Activated T-helper 1 cell treated with anti-CD3 and anti-CD28 coated beads, Interleukin-12 subunit alpha, Interleukin-12 subunit beta, Interleukin-2, Interleukin-4 antibody, amounts not matched to agents 30 ng/mL and 10 ng/mL and 1 ng/mL, durations not matched to agents 14 hours and 24 hours and 36 hours (primary cell): ENCODE measurements at regions of chr20 and their contacts with region 1.

Region 1: DNA sequence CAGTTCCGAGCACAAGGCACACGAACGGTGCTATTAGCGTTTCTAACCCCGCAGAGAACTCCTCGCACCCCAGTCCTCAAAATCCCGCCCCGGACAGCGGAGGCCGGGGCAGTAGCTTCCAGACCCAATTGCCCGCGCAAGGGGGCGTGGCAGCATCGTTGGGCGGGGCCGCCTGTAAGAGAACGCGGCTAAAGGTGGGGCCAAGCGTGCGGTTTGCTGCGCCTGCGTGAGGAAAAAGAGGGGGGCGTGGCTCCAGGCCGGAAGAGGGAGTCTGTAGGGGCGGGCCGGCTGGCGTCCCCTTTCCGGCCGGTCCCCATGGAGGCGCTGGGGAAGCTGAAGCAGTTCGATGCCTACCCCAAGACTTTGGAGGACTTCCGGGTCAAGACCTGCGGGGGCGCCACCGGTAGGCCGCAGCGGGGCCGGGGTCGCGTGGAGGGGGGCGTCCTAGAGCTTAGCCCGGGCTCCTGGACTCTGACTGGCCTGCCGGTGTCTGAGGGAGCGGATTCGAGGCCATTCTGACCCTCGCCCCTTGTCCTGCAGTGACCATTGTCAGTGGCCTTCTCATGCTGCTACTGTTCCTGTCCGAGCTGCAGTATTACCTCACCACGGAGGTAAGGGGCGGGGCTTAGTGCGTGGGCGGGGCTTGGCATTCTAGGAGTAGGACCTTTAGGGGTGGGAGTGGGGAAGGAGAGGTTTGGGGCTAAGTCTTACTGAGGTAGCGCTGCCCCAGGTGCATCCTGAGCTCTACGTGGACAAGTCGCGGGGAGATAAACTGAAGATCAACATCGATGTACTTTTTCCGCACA is at the start of gene ERGIC3:
- DNase-seq: peak; percentile 96
- H3K4me3 Mint-ChIP-seq: peak within 1 kb of the TSS; percentile 90
- H3K27ac Mint-ChIP-seq: peak within 1 kb of the TSS; percentile 88
- H3K4me1 Mint-ChIP-seq: peaks cover 12% of the 10 kb centered on the region
- H3K27me3 Mint-ChIP-seq: no peaks in the 10 kb centered on the region
- total RNA-seq, gene ERGIC3: 132 and 137 TPM in 2 replicates

Region 2: DNA sequence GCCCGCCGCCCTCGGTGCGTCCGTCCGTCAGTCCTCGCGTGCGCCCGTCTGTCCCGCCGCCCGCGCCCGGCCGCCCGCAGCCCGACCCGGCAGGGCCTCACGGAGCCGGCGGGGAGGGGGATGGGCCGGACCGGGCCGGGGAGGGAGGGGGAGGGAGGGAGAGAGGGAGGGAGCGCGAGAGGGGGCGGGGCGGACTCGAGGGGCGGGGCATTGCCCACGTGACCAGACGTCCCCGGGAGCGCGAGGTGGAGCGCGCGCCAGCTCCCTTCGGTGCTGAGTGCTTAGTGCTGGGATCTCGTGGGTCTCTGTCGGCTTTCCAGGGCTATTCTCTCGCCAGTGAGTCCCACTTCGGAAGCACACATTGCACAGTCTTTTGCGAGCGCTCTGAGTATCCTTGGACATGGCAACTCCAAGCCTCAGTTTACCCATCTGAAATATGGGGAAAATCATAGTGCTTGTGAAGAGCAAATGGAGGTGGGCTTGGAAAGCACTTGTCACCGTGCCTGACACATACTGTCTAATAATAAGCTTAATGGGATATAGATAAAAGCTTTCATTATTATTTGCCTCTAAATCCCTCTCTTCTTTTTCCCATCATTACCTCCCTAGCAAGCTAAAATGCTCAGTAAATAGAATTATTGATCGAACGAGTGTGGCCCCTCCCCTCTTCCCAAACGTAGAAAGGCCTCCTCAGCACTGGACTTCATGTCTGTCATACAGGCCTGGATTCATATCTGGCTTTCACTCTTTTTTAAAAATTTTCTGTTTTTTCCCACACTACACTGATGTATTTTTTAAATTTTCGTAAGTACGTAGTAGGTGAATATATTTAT is 716.2 kb before region 1 on chr20 and contains the start of gene NCOA6:
- intact Hi-C with region 1: loop called (anchors 5 kb)
- DNase-seq: peak; percentile 68
- H3K4me3 Mint-ChIP-seq: peak within 1 kb of the TSS; percentile 97
- H3K27ac Mint-ChIP-seq: peak within 1 kb of the TSS; percentile 91
- H3K4me1 Mint-ChIP-seq: peaks cover 30% of the 10 kb centered on the region
- H3K27me3 Mint-ChIP-seq: peaks cover 13% of the 10 kb centered on the region
- total RNA-seq, gene NCOA6: 25.5 and 29.1 TPM in 2 replicates

Region 3: DNA sequence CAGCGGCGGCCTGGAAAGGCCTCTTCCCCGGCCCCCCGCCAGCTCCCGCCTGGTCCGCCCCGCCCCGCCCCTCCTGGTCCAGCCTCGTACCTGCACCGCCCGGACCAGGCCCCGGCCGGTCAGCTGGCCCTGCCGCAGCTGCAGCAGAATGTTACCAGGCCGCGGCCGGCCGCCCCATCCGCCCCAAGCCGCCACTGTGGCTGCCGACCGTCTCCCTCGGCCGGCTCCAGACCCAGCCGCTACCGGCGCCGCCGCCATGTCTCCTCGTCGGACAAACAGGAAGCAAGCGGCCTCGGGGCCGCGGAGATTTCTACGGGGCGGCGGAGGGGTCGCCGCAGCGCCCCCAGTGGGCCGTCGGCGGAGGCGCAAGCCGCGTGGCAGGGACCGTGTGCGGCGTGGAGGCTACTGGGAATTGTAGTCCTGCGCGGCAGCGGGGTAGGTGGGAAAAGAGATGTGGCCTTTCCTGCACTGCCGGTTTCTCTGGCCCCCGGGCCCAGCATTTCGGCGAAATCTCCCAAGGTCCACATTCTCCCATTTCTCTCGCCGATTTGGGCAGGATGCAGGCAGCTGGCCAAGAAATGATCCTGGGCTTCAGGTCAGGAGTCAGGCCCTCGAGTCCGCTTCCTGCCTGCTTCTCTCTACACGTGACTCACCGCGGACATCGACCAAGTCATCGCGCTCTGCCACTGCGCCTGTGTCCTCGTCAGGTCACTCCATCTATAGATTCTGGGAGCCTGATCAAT is 449.3 kb before region 1 on chr20 and contains the start of gene TRPC4AP:
- intact Hi-C with region 1: loop called (anchors 5 kb)
- DNase-seq: peak; percentile 88
- H3K4me3 Mint-ChIP-seq: peak within 1 kb of the TSS; percentile 92
- H3K27ac Mint-ChIP-seq: peak within 1 kb of the TSS; percentile 94
- H3K4me1 Mint-ChIP-seq: peaks cover 48% of the 10 kb centered on the region
- H3K27me3 Mint-ChIP-seq: no peaks in the 10 kb centered on the region
- total RNA-seq, gene TRPC4AP: 53.9 and 54.0 TPM in 2 replicates

Region 4: DNA sequence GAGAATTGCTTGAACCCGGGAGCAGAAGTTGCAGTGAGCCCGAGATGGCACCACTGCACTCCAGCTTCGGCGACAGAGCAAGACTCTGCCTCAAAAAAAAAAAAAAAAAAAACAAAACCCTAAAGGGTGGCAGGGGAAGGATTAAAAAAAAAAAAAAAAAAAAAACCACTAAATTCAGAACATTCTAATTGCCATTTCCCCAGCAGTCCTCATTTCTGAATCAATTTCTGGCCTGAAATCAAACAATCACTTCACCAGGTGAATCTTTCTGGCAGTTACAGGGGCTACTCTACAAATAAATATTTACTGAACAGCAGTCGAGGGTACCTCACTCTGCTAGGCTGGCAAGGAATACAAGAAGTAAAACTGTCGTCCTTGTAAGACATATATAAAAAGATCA is 131.4 kb before region 1 on chr20:
- intact Hi-C with region 1: loop called (anchors 5 kb)
- DNase-seq: no peak
- H3K4me3 Mint-ChIP-seq: peak overlapping the region; percentile 87
- H3K27ac Mint-ChIP-seq: peak overlapping the region; percentile 19
- H3K4me1 Mint-ChIP-seq: peaks cover 6% of the 10 kb centered on the region
- H3K27me3 Mint-ChIP-seq: no peaks in the 10 kb centered on the region

Region 5: DNA sequence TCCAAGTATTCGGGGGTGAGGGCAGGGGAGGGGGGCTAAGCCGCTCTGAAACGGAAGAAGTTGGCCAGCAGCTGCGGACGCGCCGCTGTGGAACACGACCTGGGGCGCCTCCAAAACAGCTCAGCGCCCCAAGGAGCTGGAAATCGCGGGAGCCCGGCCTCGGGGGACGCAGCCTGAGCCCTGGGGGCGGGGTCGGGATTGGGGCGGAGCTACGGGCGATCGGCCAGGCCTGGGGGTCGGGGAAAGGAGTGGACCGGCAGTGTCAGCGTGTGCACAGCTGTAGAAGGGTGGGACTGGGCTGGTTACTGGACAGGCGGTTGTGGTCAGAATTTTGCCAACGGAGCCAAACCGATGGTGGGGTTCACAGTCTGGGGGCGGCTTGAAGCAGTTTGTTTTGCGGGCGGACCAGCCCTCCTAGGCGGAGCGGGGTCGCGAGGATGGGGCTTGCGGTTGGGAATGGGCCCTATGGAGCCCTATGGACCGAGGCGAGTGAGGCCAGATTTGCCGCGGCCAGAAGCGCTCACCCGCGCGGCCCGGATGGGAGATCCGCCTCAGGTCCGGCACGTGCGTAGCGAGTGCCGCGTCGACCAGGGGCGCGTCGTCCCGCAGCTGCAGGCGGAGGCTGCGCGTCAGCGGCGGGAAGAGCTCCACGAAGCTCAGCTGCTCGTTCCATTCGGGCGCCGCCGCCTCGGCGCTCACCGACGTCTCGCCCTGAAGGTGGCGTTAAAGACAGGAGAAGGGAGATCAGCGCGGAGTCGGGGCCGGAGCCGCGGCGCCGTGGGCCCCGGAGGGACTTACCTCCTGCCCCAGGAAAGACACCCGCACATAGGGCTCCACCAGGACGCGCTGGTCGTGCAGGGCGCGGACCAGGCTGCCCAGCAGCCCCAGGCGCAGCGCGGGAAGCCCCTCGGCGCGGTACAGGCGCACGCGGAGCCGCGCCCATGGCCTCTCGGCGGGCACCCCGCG is 59.3 kb after region 1 on chr20:
- intact Hi-C with region 1: loop called (anchors 5 kb)
- DNase-seq: peak; percentile 70
- H3K4me3 Mint-ChIP-seq: peak overlapping the region; percentile 72
- H3K27ac Mint-ChIP-seq: peak overlapping the region; percentile 31
- H3K4me1 Mint-ChIP-seq: no peaks in the 10 kb centered on the region
- H3K27me3 Mint-ChIP-seq: peaks cover 32% of the 10 kb centered on the region

Region 6: DNA sequence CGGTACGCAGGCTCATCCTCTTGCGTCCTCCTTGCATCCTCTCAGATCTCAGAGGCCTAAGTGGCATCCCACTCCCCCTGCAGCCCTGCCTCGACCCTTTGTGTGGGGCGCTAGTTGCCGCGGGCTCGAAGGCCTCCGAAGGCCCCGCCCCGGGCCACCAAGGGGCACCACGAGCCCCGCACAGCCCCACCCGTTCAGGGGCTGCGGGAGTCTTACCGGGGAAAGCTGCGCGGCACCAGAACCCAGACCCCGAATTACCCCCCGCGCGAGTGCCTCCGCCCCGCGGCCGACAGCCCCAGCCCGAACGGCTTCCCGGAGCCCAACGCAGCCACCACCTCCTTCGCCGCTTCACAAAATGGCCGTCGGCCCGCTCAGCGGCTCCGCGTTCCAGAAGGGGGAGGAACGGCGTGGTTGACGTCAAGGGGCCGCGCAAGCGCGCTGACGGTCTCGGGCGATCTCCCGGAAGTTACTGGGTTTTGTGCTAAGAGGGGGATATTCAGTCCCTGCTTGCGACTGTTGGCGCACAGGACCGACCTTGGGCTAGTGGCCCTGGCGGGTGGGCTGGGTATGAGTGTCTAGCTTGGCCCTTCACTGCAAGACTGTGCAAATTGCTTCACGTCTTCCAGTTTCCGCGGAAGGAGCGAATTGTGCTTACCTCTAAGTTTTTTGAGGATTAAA is 122.7 kb after region 1 on chr20 and contains the starts of genes CPNE1 and RBM12:
- intact Hi-C with region 1: loop called (anchors 1 kb)
- DNase-seq: peak; percentile 91
- H3K4me3 Mint-ChIP-seq: peak within 1 kb of the TSS; percentile 95
- H3K27ac Mint-ChIP-seq: peak within 1 kb of the TSS; percentile 99
- H3K4me1 Mint-ChIP-seq: peaks cover 48% of the 10 kb centered on the region
- H3K27me3 Mint-ChIP-seq: no peaks in the 10 kb centered on the region
- total RNA-seq, gene CPNE1: 304 and 308 TPM in 2 replicates
- total RNA-seq, gene RBM12: 151 and 168 TPM in 2 replicates

Region 7: DNA sequence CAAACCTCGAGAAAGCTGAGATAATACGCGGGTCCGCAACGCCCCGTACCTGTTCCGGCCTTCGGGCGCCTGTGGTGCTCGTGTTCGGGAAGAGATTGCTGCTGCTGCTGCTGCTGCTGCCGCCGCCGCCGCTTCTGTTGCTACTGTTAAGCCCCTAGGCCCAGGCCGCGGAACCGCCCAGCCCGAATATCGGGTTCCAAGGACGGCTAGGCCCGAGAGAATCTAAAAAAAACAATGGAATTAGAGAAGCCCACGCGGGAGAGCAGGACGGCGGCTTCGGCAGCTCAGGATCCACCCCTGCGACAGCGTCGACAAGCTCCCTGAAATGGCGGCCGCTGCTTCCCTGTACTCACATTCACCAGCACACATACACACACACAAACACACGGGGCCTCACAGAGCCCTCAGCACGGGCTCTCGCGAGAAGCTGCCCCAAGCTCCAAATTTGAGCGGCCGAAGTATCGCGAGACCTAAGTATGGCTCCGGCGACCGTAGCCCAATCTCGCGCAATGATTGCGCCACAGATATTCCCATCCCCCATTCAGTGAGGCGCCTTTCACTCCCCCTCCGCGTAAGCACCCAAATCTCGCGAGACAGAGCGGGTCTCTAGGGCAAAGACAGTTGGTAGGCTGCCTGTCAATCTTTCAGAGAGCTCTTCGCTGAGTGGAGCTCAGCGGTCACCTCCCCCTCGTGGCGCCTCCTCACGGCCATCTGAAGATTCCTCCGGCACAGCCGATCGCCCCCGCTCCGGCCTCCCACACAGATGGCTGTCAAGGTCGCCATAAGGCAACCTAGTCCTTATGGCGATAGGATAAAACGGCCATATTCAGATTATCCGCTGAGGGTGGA is 200.1 kb after region 1 on chr20 and contains the start of gene RBM39:
- intact Hi-C with region 1: loop called (anchors 1 kb)
- DNase-seq: peak; percentile 100
- H3K4me3 Mint-ChIP-seq: peak within 1 kb of the TSS; percentile 98
- H3K27ac Mint-ChIP-seq: peak within 1 kb of the TSS; percentile 99
- H3K4me1 Mint-ChIP-seq: peaks cover 40% of the 10 kb centered on the region
- H3K27me3 Mint-ChIP-seq: no peaks in the 10 kb centered on the region
- total RNA-seq, gene RBM39: 349 and 357 TPM in 2 replicates

Region 8: DNA sequence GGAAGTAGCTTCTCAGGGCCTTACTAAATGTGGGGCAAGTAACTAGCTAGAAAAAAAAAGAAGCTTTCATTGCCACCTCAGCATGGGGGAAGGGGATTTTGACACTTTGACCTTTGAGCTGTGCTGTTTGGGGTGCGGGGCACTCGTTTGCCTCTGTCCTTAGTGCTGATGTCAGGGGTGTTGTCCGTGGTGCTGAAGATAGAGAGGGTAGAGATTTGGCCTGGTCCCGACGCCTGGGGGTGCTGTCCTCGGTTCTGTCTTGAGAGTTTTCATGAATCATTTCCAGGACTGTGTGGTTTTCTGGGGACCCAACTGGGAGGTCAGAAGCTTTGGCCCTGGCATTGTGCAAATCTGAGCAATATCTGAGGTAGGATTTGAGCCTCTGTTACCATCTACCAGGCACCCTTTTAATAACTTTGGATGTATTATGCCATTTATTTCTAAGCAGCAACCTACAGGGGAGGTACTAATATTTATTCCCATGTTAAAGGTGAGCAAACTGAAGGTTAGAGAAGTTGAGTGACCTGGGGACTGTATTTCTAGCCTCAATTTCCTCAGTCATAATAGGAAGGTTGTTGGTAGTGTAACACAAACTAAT is 842.1 kb after region 1 on chr20:
- intact Hi-C with region 1: no loop called
- DNase-seq: peak; percentile 5
- H3K4me3 Mint-ChIP-seq: no peak overlapping the region
- H3K27ac Mint-ChIP-seq: no peak overlapping the region
- H3K4me1 Mint-ChIP-seq: no peaks in the 10 kb centered on the region
- H3K27me3 Mint-ChIP-seq: peaks cover 3% of the 10 kb centered on the region